Dendritic cell treated with granulocyte-macrophage colony-stimulating factor and Interleukin-4, amounts not matched to agents 40 ng/mL and 50 ng/mL, for 4 days (primary cell): ENCODE measurements at regions of chr19 and their contacts with region 1.

Region 1: DNA sequence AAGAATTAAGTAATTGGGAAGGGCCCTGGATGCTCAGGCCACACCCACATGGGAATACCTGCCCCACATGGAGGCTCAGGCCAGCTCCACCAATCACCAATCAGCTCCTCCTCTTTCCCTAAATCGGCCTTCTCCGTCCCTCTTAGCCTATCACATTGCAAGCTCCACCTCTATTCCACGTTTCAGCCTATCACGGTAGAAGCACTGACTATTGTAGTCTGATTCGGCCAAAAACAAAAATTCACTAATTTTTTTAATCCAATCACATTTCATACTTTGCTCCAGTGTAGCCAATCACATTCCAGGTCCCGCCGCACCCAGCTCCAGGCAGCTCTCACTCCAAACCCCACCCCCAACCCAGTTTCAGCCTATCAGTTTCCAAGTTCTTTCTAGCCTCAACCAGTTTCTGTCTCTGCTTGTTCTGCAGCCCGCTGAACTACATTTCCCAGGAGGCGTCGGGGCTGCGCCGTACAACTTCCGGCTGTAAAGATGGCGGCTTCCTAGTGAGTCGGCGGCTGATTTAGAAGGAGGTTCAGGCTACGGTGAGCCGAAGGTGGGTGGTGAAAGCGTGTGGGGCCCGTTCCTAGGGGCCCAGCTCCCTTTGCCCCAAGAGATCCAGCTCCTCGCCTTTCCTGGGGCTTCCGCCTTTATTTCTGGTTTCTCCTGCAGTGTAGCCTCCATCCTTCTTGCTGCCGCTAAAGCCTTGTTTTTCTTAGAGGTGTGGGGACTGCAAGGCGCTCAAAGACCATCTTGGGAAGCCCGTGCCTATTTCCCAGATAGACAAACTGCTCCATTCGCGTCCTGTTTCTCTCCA is at the start of gene BABAM1:
- H3K4me3 Mint-ChIP-seq: peak within 1 kb of the TSS; percentile 80
- H3K27ac Mint-ChIP-seq: peak within 1 kb of the TSS; percentile 84
- H3K4me1 Mint-ChIP-seq: peaks cover 21% of the 10 kb centered on the region
- H3K27me3 Mint-ChIP-seq: peaks cover 5% of the 10 kb centered on the region

Region 2: DNA sequence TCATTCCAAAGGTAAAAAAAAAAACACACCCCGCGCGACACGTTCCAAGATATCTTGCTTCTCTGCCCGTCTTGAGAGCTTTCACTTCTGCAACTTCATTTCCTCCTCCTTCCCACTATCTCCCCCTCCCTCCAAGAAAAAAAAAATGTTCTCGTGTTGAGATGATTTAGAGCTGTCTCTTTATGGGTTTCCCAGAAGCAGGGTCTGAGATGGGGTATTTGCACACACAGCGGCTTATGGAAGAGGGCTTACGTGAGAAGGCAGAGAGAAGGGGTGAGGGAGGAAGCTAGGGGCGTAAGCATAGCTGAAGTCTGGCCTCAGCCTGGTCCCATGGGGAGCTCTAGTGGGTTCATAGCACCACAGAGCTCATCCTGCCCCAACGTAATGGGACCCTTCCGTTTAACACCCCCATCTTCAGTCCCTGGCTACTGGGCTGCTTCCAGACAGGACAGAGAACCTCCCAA is 83.3 kb before region 1 on chr19:
- intact Hi-C with region 1: no loop called
- H3K4me3 Mint-ChIP-seq: peak overlapping the region; percentile 62
- H3K27ac Mint-ChIP-seq: peak overlapping the region; percentile 77
- H3K4me1 Mint-ChIP-seq: peaks cover 39% of the 10 kb centered on the region
- H3K27me3 Mint-ChIP-seq: no peaks in the 10 kb centered on the region

Region 3: GRCh38 chr19:17215125-17215971 is 51.8 kb before region 1 on chr19 and contains the start of gene USE1:
- intact Hi-C with region 1: loop called (anchors 2 kb)
- H3K4me3 Mint-ChIP-seq: peak within 1 kb of the TSS; percentile 79
- H3K27ac Mint-ChIP-seq: peak within 1 kb of the TSS; percentile 96
- H3K4me1 Mint-ChIP-seq: peaks cover 30% of the 10 kb centered on the region
- H3K27me3 Mint-ChIP-seq: no peaks in the 10 kb centered on the region

Region 4: DNA sequence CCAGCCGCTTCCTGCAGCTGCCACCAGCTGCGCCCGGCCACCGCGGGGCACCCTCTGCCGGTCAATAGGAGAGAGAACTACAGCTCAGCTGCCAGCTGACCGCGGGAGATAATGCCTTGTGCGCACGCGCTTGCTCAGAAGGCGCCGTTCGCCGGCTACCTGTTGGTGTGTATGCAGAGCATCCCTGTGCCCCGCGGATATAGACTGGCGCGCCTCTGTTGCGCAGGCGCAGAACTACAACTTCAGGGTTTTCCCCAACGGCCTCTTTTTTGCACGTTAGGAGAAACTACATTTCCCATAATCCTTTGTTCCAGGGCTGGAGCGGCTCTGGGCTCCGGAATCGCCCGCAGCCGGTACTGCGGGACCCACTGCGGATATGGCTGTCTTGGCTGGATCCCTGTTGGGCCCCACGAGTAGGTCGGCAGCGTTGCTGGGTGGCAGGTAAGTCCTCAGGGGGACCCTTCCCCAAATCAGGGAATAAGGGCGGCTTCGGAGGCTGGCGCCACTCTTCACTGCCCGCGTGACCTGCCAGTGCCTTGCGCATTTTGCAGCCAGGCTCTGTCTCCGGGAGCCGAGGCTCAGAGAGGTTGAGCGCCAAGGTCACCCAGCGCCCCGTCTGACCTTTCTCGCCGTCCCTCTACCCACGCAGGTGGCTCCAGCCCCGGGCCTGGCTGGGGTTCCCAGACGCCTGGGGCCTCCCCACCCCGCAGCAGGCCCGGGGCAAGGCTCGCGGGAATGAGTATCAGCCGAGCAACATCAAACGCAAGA is 38.5 kb after region 1 on chr19 and contains the start of gene MRPL34:
- intact Hi-C with region 1: loop called (anchors 1 kb)
- H3K4me3 Mint-ChIP-seq: peak within 1 kb of the TSS; percentile 85
- H3K27ac Mint-ChIP-seq: peak within 1 kb of the TSS; percentile 92
- H3K4me1 Mint-ChIP-seq: peaks cover 60% of the 10 kb centered on the region
- H3K27me3 Mint-ChIP-seq: no peaks in the 10 kb centered on the region

Region 5: GRCh38 chr19:17336872-17337722 is 69.9 kb after region 1 on chr19 and contains the start of gene GTPBP3:
- intact Hi-C with region 1: no loop called
- H3K4me3 Mint-ChIP-seq: peak within 1 kb of the TSS; percentile 97
- H3K27ac Mint-ChIP-seq: peak within 1 kb of the TSS; percentile 99
- H3K4me1 Mint-ChIP-seq: peaks cover 65% of the 10 kb centered on the region
- H3K27me3 Mint-ChIP-seq: no peaks in the 10 kb centered on the region